Heart left ventricle (tissue), 16 donors: ENCODE measurements at regions of chr9 and their contacts with region 1.

Region 1: GRCh38 chr9:3261484-3261883 is 264.3 kb downstream of the RFX3 start:
- DNase-seq: no peak
- ATAC-seq: no peak
- H3K4me3 ChIP-seq: no peak overlapping the region
- H3K27ac ChIP-seq: no peak overlapping the region
- H3K4me1 ChIP-seq: no peaks in the 10 kb centered on the region
- H3K27me3 ChIP-seq: no peaks in the 10 kb centered on the region
- CTCF ChIP-seq: no peak
- POLR2A ChIP-seq: no peak

Region 2: GRCh38 chr9:2722715-2723114 is 538.8 kb before region 1 on chr9:
- intact Hi-C with region 1: no loop called
- DNase-seq: no peak
- ATAC-seq: no peak
- H3K4me3 ChIP-seq: no peak overlapping the region
- H3K27ac ChIP-seq: no peak overlapping the region
- H3K4me1 ChIP-seq: peaks cover 0 to 19% (median 2%) of the 10 kb centered on the region in 12 donors
- H3K27me3 ChIP-seq: no peaks in the 10 kb centered on the region
- CTCF ChIP-seq: no peak
- POLR2A ChIP-seq: no peak

Region 3: GRCh38 chr9:3161665-3162306 is 99.7 kb before region 1 on chr9:
- intact Hi-C with region 1: no loop called
- DNase-seq: no peak
- ATAC-seq: no peak
- H3K4me3 ChIP-seq: no peak overlapping the region
- H3K27ac ChIP-seq: no peak overlapping the region
- H3K4me1 ChIP-seq: no peaks in the 10 kb centered on the region
- H3K27me3 ChIP-seq: peaks cover 0 to 26% (median 0%) of the 10 kb centered on the region in 9 donors
- CTCF ChIP-seq: no peak
- POLR2A ChIP-seq: no peak

Region 4: DNA sequence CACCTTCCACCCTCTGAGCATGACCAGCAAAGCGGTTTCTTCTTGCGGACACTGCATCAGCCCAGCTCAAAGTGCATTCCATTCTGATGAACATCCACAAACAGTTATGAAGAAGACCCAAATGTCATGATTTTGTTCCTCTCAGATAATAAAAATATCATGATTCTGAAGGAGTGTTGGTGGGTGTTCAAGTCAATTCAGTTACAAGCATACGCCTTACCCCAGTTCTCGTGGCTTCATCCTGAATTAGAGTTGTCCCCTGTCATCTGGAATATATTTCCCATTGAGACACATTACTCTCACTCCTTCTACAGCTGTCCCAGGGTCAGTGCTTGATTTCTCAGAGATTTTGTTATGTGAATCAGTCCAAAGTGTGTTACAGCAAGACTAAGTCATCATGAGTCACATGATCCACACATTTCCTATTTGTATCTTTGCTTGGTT is 61.1 kb before region 1 on chr9:
- intact Hi-C with region 1: no loop called
- DNase-seq: no peak
- ATAC-seq: no peak
- H3K4me3 ChIP-seq: no peak overlapping the region
- H3K27ac ChIP-seq: no peak overlapping the region
- H3K4me1 ChIP-seq: no peaks in the 10 kb centered on the region
- H3K27me3 ChIP-seq: peaks cover 0 to 4% (median 0%) of the 10 kb centered on the region in 9 donors
- CTCF ChIP-seq: no peak
- POLR2A ChIP-seq: no peak

Region 5: GRCh38 chr9:3329361-3329760 is 67.9 kb after region 1 on chr9:
- intact Hi-C with region 1: loop called in 1 of 10 experiments (anchors 10 kb)
- DNase-seq: no peak
- ATAC-seq: no peak
- H3K4me3 ChIP-seq: no peak overlapping the region
- H3K27ac ChIP-seq: no peak overlapping the region
- H3K4me1 ChIP-seq: peaks cover 0 to 7% (median 2%) of the 10 kb centered on the region in 12 donors
- H3K27me3 ChIP-seq: no peaks in the 10 kb centered on the region
- CTCF ChIP-seq: no peak
- POLR2A ChIP-seq: no peak

Region 6: DNA sequence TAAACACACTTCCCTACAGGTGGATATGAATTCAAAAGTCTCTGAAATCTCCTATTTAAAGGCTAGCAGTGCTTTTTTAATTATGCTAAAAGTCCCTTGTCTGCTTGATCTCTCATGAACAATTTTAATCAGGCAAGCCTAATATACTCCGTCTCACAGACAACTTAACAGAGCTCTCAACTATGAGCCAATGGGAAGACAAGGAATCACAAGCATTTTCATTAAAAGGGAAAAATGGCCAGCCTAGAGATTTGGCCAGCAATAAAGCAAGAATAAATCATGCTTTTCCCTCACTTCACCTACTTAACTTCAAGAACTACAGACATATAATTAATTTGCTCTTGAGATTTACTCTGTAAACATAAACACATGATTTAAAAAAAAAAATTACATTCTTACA is 186.3 kb after region 1 on chr9:
- intact Hi-C with region 1: loop called in 1 of 10 experiments (anchors 5 kb)
- DNase-seq: no peak
- ATAC-seq: no peak
- H3K4me3 ChIP-seq: no peak overlapping the region
- H3K27ac ChIP-seq: no peak overlapping the region
- H3K4me1 ChIP-seq: no peaks in the 10 kb centered on the region
- H3K27me3 ChIP-seq: no peaks in the 10 kb centered on the region
- CTCF ChIP-seq: no peak
- POLR2A ChIP-seq: no peak

Region 7: GRCh38 chr9:3549225-3549624 is 287.7 kb after region 1 on chr9:
- intact Hi-C with region 1: loop called in 1 of 10 experiments (anchors 10 kb)
- DNase-seq: no peak
- ATAC-seq: no peak
- H3K4me3 ChIP-seq: no peak overlapping the region
- H3K27ac ChIP-seq: no peak overlapping the region
- H3K4me1 ChIP-seq: no peaks in the 10 kb centered on the region
- H3K27me3 ChIP-seq: no peaks in the 10 kb centered on the region
- CTCF ChIP-seq: no peak
- POLR2A ChIP-seq: no peak